IMR-90 (cell line): ENCODE measurements at regions of chr5 and their contacts with region 1.

Region 1: GRCh38 chr5:133539818-133540217 is 72.5 kb downstream of the FSTL4 start:
- DNase-seq: no peak
- ATAC-seq: 0 out of 2 replicates have a peak, but pooled peaks have one; percentile 27
- H3K4me3 ChIP-seq: no peak overlapping the region
- H3K27ac ChIP-seq: no peak overlapping the region
- H3K4me1 ChIP-seq: no peaks in the 10 kb centered on the region
- H3K27me3 ChIP-seq: 0 out of 2 replicates have a peak, but pooled peaks cover 1% of the 10 kb centered on the region
- CTCF ChIP-seq: no peak
- POLR2A ChIP-seq: no peak
- RAD21 ChIP-seq: no peak

Region 2: GRCh38 chr5:133523013-133523658 is 16.7 kb before region 1 on chr5:
- CTCF ChIA-PET with region 1: interaction called, 5 read pairs
- POLR2A ChIA-PET with region 1: interaction called, 16 read pairs
- dilution Hi-C with region 1: no loop called
- in situ Hi-C with region 1: no loop called
- intact Hi-C with region 1: no loop called
- DNase-seq: no peak
- ATAC-seq: no peak
- H3K4me3 ChIP-seq: no peak overlapping the region
- H3K27ac ChIP-seq: no peak overlapping the region
- H3K4me1 ChIP-seq: no peaks in the 10 kb centered on the region
- H3K27me3 ChIP-seq: peaks cover 16% of the 10 kb centered on the region
- CTCF ChIP-seq: no peak
- POLR2A ChIP-seq: no peak
- RAD21 ChIP-seq: no peak